Psoas muscle (tissue), 8 donors: ENCODE measurements at regions of chr3 and their contacts with region 1.

Region 1: GRCh38 chr3:125003369-125003853 is 52.4 kb downstream of the HEG1 start:
- DNase-seq: peak; percentile 77 to 90
- ATAC-seq: peak; percentile 98 to 100 (median 98)
- H3K4me3 ChIP-seq: peak overlapping the region; percentile 24
- H3K27ac ChIP-seq: peak overlapping the region; percentile 67
- H3K4me1 ChIP-seq: peaks cover 31% of the 10 kb centered on the region
- H3K27me3 ChIP-seq: no peaks in the 10 kb centered on the region
- CTCF ChIP-seq: no peak

Region 2: GRCh38 chr3:124850633-124851032 is 152.8 kb before region 1 on chr3:
- intact Hi-C with region 1: no loop called
- DNase-seq: peak; percentile 51 to 59
- ATAC-seq: peak in 1 of 4 donors; percentile 45
- H3K4me3 ChIP-seq: no peak overlapping the region
- H3K27ac ChIP-seq: no peak overlapping the region
- H3K4me1 ChIP-seq: peaks cover 6% of the 10 kb centered on the region
- H3K27me3 ChIP-seq: no peaks in the 10 kb centered on the region
- CTCF ChIP-seq: no peak

Region 3: DNA sequence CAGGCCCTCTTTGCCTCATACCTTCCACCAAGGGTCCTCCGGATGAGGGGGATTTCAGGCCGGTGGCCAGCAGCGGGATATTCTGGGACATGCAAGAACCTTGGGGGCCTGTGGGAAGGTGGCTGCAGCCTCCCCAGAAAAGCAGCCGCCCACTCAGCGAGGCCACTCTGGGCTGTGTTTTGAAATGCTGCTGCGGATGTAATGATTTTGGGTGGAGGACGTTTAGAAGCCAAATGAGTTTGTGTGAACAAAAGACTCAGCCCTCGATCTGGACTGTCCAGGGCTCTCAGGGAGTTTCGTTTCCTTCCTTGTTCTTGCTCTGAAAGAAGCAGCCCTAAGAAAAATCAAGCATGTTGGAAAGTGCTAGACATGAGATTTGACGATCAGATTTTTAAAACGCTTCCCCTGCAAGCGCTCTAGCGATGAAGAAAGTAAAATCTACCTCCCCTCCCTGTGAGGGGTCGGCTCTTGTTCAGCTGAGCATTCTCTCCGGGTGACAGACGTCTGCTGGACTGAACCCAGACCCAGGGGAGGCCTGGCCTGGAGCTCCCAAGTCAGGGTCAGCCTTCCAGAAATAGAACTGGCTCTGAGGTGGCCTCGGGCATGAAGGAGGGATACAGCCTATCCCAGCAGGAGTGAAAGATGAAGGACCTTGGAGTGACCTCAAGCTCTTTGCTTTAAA is 39.5 kb after region 1 on chr3:
- intact Hi-C with region 1: loop called in 1 of 2 experiments (anchors 5 kb)
- DNase-seq: peak; percentile 53 to 79
- ATAC-seq: peak; percentile 80 to 93 (median 90)
- H3K4me3 ChIP-seq: peak overlapping the region; percentile 49
- H3K27ac ChIP-seq: peak overlapping the region; percentile 78
- H3K4me1 ChIP-seq: peaks cover 57% of the 10 kb centered on the region
- H3K27me3 ChIP-seq: no peaks in the 10 kb centered on the region
- CTCF ChIP-seq: no peak

Region 4: GRCh38 chr3:125418306-125418705 is 414.9 kb after region 1 on chr3:
- intact Hi-C with region 1: no loop called
- DNase-seq: no peak
- ATAC-seq: no peak
- H3K4me3 ChIP-seq: no peak overlapping the region
- H3K27ac ChIP-seq: no peak overlapping the region
- H3K4me1 ChIP-seq: no peaks in the 10 kb centered on the region
- H3K27me3 ChIP-seq: no peaks in the 10 kb centered on the region
- CTCF ChIP-seq: no peak